GM23248 (cell line): ENCODE measurements at regions of chr1 and their contacts with region 1.

Region 1: DNA sequence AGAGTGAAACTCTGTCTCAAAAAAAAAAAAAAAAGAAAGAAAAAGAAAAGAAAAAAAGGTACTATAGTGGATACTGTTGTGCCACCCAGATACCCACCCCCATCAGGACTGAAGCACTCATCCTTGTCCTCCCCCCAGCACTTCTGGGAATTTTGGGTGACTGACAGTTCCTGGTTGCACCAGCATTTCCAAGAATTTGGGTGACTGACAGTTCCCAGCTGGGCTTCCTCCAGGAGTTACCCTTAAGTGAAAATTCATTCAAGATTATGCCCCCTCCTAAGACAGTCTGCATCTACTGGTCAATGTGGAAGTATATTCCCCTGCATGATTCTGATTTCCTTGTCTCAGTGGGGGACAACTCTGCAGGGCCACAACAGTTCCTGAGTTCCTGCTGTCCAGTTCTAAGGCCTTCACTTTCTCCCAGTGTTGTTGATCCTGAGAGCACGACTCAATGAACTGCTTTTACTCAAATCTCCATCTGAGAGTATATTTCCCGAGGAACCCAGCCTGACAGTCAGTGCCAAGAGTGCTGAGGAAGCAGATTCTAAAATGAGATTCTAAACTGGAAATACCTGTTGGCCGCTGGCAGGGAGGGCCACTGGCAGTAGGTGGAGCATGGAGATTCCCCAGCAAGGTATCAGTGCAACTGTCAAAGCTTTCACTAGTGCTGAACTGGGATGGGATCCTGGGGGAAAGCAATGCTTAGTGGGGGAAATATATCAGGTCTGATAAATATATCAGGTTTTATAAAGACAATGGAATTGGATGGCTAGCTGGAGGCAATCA is 18.5 kb downstream of the RIIAD1 start:
- DNase-seq: no peak
- H3K4me3 ChIP-seq: no peak overlapping the region
- H3K27ac ChIP-seq: no peak overlapping the region
- H3K4me1 ChIP-seq: no peaks in the 10 kb centered on the region
- H3K27me3 ChIP-seq: peaks cover 25% of the 10 kb centered on the region

Region 2: GRCh38 chr1:151459331-151460046 is 280.3 kb before region 1 on chr1 and contains the start of gene POGZ:
- in situ Hi-C with region 1: loop called (anchors 10 kb)
- DNase-seq: peak; percentile 98
- H3K4me3 ChIP-seq: peak within 1 kb of the TSS; percentile 98
- H3K27ac ChIP-seq: peak within 1 kb of the TSS; percentile 85
- H3K4me1 ChIP-seq: peaks cover 16% of the 10 kb centered on the region
- H3K27me3 ChIP-seq: no peaks in the 10 kb centered on the region
- total RNA-seq, gene POGZ: 14.7 and 14.9 TPM in 2 replicates

Region 3: GRCh38 chr1:152237093-152237492 is 497.3 kb after region 1 on chr1:
- in situ Hi-C with region 1: no loop called
- DNase-seq: no peak
- H3K4me3 ChIP-seq: no peak overlapping the region
- H3K27ac ChIP-seq: no peak overlapping the region
- H3K4me1 ChIP-seq: no peaks in the 10 kb centered on the region
- H3K27me3 ChIP-seq: no peaks in the 10 kb centered on the region